ENCODE measurements at regions of chr11 and their contacts with region 1.

Region 1: GRCh38 chr11:117426269-117426685 is 98.6 kb downstream of the CEP164 start:
- DNase-seq: peak; percentile 72 to 87 (median 79)
- H3K4me3 ChIP-seq: peak overlapping the region in 29 of 59 donors; percentile 3 to 52 (median 25)
- H3K27ac ChIP-seq: peak overlapping the region in 39 of 59 donors; percentile 2 to 86 (median 52)
- H3K27me3 ChIP-seq: no peaks in the 10 kb centered on the region
- CTCF ChIP-seq: peak; percentile 80 to 99 (median 96)

Region 2: GRCh38 chr11:116972691-116973090 is 453.6 kb before region 1 on chr11:
- intact Hi-C with region 1: no loop called
- DNase-seq: no peak
- H3K4me3 ChIP-seq: no peak overlapping the region
- H3K27ac ChIP-seq: peak overlapping the region in 52 of 59 donors; percentile 3 to 96 (median 63)
- H3K27me3 ChIP-seq: no peaks in the 10 kb centered on the region
- CTCF ChIP-seq: peak in 22 of 56 donors; percentile 9 to 48 (median 24)

Region 3: GRCh38 chr11:117807482-117808327 is 381.4 kb after region 1 on chr11:
- intact Hi-C with region 1: loop called in 1 of 2 experiments (anchors 2 kb)
- DNase-seq: peak; percentile 77 to 95 (median 84)
- H3K4me3 ChIP-seq: no peak overlapping the region
- H3K27ac ChIP-seq: no peak overlapping the region
- H3K27me3 ChIP-seq: no peaks in the 10 kb centered on the region
- CTCF ChIP-seq: peak; percentile 82 to 98 (median 94)

Region 4: GRCh38 chr11:117817368-117818040 is 391.2 kb after region 1 on chr11:
- intact Hi-C with region 1: loop called (anchors 2 kb)
- DNase-seq: peak; percentile 74 to 94 (median 90)
- H3K4me3 ChIP-seq: peak overlapping the region in 23 of 59 donors; percentile 1 to 51 (median 25)
- H3K27ac ChIP-seq: peak overlapping the region in 1 of 59 donors; percentile 75
- H3K27me3 ChIP-seq: peaks cover 0 to 5% (median 0%) of the 10 kb centered on the region in 45 donors
- CTCF ChIP-seq: peak; percentile 98 to 100 (median 100)

Region 5: DNA sequence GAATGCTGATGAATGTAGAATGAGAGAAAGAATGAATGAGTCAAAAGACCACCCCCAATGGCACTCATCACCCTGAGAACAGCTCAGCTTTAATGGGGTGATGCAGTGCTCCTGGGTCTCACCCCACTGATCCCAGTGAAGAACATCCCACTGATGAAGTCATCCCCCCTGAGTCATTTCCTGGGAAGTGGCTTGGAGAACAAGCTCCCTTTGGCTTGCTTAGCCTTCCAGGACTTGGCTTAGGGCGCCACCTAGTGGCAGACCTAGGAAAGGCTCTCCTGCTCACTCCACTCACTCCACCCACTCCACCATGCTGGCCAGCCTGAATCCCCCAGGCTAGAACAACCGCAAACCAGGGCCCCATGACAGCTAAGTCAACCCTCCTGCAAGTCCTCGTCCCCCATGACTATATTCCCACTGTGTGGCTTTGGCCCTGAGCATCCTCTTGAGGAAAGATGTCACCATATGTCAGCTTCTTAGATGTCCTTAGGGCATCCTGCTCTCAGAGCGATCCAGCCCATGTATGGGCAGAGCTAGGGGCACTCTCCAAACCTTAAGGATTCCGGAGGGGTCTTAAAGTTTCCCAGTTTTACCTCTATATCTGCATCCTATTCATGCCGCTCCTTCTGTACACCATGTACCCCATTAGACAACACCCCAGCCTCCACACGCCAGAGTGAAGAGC is 520.7 kb after region 1 on chr11:
- intact Hi-C with region 1: loop called in 1 of 2 experiments (anchors 5 kb)
- DNase-seq: peak; percentile 82 to 93 (median 90)
- H3K4me3 ChIP-seq: no peak overlapping the region
- H3K27ac ChIP-seq: peak overlapping the region in 1 of 59 donors; percentile 44
- H3K27me3 ChIP-seq: peaks cover 0 to 2% (median 0%) of the 10 kb centered on the region in 45 donors
- CTCF ChIP-seq: peak; percentile 89 to 100 (median 98)

Measured in dorsolateral prefrontal cortex (tissue), 120 donors.